K562 (cell line): ENCODE measurements at regions of chr5 and their contacts with region 1.

Region 1: GRCh38 chr5:177425801-177426565 is 493 bp upstream of the GRK6 start:
- DNase-seq: peak; percentile 98 to 100 (median 98)
- ATAC-seq: peak; percentile 91
- H3K4me3 ChIP-seq: peak overlapping the region; percentile 51
- H3K27ac ChIP-seq: peak overlapping the region; percentile 91
- H3K4me1 ChIP-seq: peaks cover 30 to 53% of the 10 kb centered on the region in 2 experiments
- H3K27me3 ChIP-seq: no peaks in the 10 kb centered on the region
- CTCF ChIP-seq: no peak
- EP300 ChIP-seq: 0 out of 2 replicates have a peak, but pooled peaks have one; percentile 17
- POLR2A ChIP-seq: peak; percentile 93
- RAD21 ChIP-seq: no peak

Region 2: GRCh38 chr5:177378884-177379883 is 46.8 kb before region 1 on chr5:
- CTCF ChIA-PET with region 1: no interaction called
- POLR2A ChIA-PET with region 1: interaction called, 14 read pairs
- in situ Hi-C with region 1: no loop called
- intact Hi-C with region 1: no loop called
- DNase-seq: peak; percentile 70 to 91 (median 77)
- ATAC-seq: peak; percentile 93
- H3K4me3 ChIP-seq: no peak overlapping the region
- H3K27ac ChIP-seq: peak overlapping the region; percentile 88
- H3K4me1 ChIP-seq: peaks cover 16 to 29% of the 10 kb centered on the region in 2 experiments
- H3K27me3 ChIP-seq: no peaks in the 10 kb centered on the region; a peak in 1 of 5 replicates
- CTCF ChIP-seq: no peak
- EP300 ChIP-seq: peak; percentile 28; the same call in 1 of the 2 replicates
- POLR2A ChIP-seq: peak; percentile 71
- RAD21 ChIP-seq: no peak; a peak in 1 of 4 replicates

Region 3: DNA sequence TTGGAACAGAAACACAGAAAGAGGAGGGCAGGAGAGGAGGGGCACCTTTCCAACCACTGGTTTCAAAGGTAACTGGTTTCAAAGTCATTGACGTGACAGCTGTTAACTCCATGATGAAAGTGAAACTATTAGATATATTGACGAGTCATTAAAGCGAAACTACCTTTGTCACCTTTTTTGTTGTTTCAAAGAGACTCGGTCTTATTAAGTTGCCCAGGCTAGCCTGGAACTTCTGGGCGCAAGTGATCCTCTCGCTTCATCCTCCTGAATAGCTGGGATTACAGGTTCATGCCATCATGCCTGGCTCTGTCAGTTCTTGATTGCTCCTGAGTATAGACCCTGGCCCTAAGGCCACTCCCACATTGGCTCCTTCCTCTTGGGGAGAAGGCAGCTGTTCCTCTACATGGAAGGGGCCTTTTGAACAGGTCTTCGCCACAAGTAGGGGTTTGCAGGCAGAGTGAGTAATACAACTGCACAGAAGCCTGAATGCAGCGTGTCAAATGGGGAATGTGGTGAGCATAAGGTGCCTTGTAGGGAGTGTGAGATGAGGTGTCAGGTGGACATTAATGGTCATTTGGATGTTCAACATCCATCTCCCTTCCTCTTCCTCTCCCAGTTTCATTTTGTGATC is 13.3 kb before region 1 on chr5:
- CTCF ChIA-PET with region 1: no interaction called
- POLR2A ChIA-PET with region 1: interaction called, 32 read pairs
- in situ Hi-C with region 1: no loop called
- intact Hi-C with region 1: no loop called
- DNase-seq: no peak
- ATAC-seq: peak; percentile 16; the same call in 2 of the 3 replicates
- H3K4me3 ChIP-seq: no peak overlapping the region
- H3K27ac ChIP-seq: no peak overlapping the region
- H3K4me1 ChIP-seq: no peaks in the 10 kb centered on the region; a peak in 1 of 5 replicates
- H3K27me3 ChIP-seq: no peaks in the 10 kb centered on the region
- CTCF ChIP-seq: no peak
- EP300 ChIP-seq: no peak
- POLR2A ChIP-seq: no peak
- RAD21 ChIP-seq: no peak

Region 4: DNA sequence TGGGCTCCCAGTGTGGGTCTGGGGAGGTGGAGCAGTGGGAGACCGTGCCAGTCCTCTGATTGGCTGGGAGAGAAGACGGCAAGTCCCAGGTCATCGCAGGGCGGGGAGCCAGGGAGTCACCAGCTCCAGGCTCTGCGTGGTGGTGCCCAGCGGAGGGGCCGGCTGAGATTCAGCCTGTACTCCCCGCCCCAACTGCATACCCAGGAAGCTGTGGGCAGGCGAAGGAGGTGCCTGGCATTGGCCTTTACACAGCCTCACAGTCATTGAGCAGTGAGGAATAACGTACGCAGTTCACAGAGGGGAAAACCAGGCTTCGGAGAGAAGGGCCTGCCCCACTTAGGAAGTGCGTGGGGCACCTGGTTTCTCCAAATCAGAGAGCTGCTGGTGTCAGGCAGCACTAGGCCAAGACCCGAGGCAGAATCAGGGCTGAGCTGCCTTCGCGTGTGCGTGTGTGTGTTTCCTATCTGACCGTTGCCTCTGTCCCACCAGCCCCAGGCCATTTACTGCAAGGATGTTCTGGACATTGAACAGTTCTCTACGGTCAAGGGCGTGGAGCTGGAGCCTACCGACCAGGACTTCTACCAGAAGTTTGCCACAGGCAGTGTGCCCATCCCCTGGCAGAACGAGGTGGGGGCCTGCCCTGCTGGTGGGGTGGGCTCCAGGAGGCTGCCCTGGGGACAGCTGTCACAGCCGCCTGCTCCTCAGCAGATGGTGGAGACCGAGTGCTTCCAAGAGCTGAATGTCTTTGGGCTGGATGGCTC is 14.4 kb after region 1 on chr5:
- CTCF ChIA-PET with region 1: no interaction called
- POLR2A ChIA-PET with region 1: interaction called, 210 read pairs
- in situ Hi-C with region 1: no loop called
- intact Hi-C with region 1: no loop called
- DNase-seq: no peak
- ATAC-seq: no peak
- H3K4me3 ChIP-seq: no peak overlapping the region
- H3K27ac ChIP-seq: no peak overlapping the region
- H3K4me1 ChIP-seq: peaks cover 9 to 41% of the 10 kb centered on the region in 2 experiments; a peak in 4 of 5 replicates
- H3K27me3 ChIP-seq: no peaks in the 10 kb centered on the region
- CTCF ChIP-seq: no peak
- EP300 ChIP-seq: no peak
- POLR2A ChIP-seq: peak; percentile 26; the same call in 1 of the 2 replicates
- RAD21 ChIP-seq: no peak

Region 5: DNA sequence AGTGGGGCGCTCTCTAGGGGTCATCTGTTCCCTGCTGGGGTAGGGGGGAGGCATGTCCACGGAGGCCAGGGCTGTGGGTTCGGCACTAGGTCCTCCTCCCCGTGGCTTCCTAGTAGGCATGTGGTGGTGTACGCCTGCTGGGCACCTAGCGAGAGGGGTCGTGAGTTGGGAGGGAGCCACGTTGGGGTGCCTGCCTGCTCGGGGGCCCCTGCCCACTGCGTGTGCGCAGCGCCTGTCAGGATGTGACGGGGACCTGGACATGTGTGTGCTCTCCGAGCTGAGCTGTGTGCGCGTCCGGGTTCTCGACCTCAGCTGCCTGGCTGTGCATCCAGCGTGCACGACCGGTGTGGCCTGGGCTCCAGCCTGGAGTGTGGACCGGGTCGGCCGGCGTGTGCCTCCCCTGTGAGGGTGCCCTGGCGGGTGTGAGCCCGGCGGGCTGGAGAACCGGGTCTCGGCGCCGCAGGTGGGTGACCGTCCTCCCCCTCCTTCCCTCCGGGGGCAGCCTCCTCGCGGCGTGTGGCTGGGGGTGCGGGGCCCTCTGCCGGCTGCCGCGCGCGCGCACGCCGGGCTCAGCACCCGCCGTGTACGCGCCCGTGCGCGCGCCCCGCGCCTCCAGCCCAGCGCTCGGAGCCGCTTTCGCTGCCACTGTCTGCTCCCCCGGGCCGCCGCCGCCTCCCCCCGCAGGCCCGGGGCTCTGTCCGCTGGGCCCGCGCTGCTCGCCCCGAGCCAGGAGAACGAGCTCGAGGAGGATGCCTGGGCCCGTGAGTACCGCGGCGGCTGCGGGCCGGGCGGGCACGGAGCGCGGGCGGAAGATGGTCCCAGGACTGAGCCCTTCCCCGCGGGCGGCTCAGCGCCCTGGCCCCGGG is 20.4 kb after region 1 on chr5 and contains the start of gene PRR7:
- CTCF ChIA-PET with region 1: no interaction called
- POLR2A ChIA-PET with region 1: interaction called, 210 read pairs
- in situ Hi-C with region 1: no loop called
- intact Hi-C with region 1: no loop called
- DNase-seq: peak; percentile 80 to 86 (median 86)
- ATAC-seq: peak; percentile 59
- H3K4me3 ChIP-seq: peak within 1 kb of the TSS; percentile 62
- H3K27ac ChIP-seq: peak within 1 kb of the TSS; percentile 59
- H3K4me1 ChIP-seq: peaks cover 19 to 53% of the 10 kb centered on the region in 2 experiments
- H3K27me3 ChIP-seq: no peaks in the 10 kb centered on the region
- CTCF ChIP-seq: peak; percentile 11 to 32 (median 17); a peak in 2 of 6 replicates
- EP300 ChIP-seq: no peak
- POLR2A ChIP-seq: peak; percentile 74
- RAD21 ChIP-seq: peak; percentile 22; a peak in 2 of 4 replicates
- polyA plus RNA-seq, gene PRR7: not detected

Region 6: GRCh38 chr5:178113199-178113787 is 687.3 kb after region 1 on chr5 and contains the start of gene N4BP3:
- CTCF ChIA-PET with region 1: no interaction called
- POLR2A ChIA-PET with region 1: no interaction called
- in situ Hi-C with region 1: no loop called
- intact Hi-C with region 1: no loop called
- DNase-seq: peak; percentile 90 to 98 (median 97)
- ATAC-seq: peak; percentile 92
- H3K4me3 ChIP-seq: peak within 1 kb of the TSS; percentile 66
- H3K27ac ChIP-seq: peak within 1 kb of the TSS; percentile 60
- H3K4me1 ChIP-seq: peaks cover 31 to 48% of the 10 kb centered on the region in 2 experiments; a peak in 4 of 5 replicates
- H3K27me3 ChIP-seq: no peaks in the 10 kb centered on the region
- CTCF ChIP-seq: peak; percentile 19 to 61 (median 34); a peak in 4 of 6 replicates
- EP300 ChIP-seq: 0 out of 2 replicates have a peak, but pooled peaks have one; percentile 43
- POLR2A ChIP-seq: peak; percentile 42; the same call in 1 of the 2 replicates
- RAD21 ChIP-seq: peak in 1 of 2 experiments; percentile 18; a peak in 2 of 4 replicates
- polyA plus RNA-seq, gene N4BP3: 0.06 to 0.10 TPM